CD4-positive, alpha-beta memory T cell (primary cell): ENCODE measurements at regions of chr5 and their contacts with region 1.

Region 1: GRCh38 chr5:138491669-138492559 is 26.6 kb downstream of the EGR1 start:
- DNase-seq: peak; percentile 81 to 87 (median 83)
- H3K4me3 ChIP-seq: peak overlapping the region in 1 of 2 donors; percentile 60
- H3K4me3 Mint-ChIP-seq: peak overlapping the region; percentile 84 to 97 (median 92)
- H3K27ac ChIP-seq: peak overlapping the region; percentile 34
- H3K27ac Mint-ChIP-seq: peak overlapping the region in 4 of 7 donors; percentile 71 to 94 (median 79)
- H3K4me1 ChIP-seq: peaks cover 24% of the 10 kb centered on the region
- H3K4me1 Mint-ChIP-seq: peaks cover 7 to 21% (median 12%) of the 10 kb centered on the region in 4 donors
- H3K27me3 ChIP-seq: peaks cover 8% of the 10 kb centered on the region
- H3K27me3 Mint-ChIP-seq: peaks cover 4 to 16% of the 10 kb centered on the region in 2 donors

Region 2: DNA sequence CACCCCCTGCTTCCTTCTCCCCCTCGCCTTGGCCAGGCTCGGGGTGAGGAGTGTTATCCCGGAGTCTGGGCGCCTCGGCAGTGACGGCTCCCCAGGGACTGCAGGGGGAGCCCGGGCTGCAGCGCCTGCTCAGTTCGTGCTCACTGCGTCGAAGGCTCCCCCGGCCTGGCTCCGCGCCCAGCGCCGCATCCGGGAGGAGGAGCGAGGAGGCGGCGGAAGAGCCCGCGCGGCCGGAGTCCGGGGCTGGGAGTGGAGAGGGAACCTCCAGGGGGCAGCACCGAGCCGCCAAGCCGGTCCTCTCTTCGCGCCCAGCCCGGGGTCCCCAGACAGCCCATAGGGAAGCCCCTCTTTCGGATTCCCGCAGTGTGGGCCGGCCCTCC is 27.9 kb before region 1 on chr5:
- CTCF ChIA-PET with region 1: interaction called, 507 read pairs
- POLR2A ChIA-PET with region 1: interaction called, 27 read pairs
- intact Hi-C with region 1: loop called (anchors 1 kb)
- DNase-seq: peak; percentile 91 to 95 (median 94)
- H3K4me3 ChIP-seq: peak overlapping the region; percentile 79 to 85
- H3K4me3 Mint-ChIP-seq: peak overlapping the region; percentile 85 to 97 (median 90)
- H3K27ac ChIP-seq: peak overlapping the region; percentile 90
- H3K27ac Mint-ChIP-seq: peak overlapping the region; percentile 89 to 96 (median 93)
- H3K4me1 ChIP-seq: peaks cover 46% of the 10 kb centered on the region
- H3K4me1 Mint-ChIP-seq: peaks cover 27 to 65% (median 39%) of the 10 kb centered on the region in 4 donors
- H3K27me3 ChIP-seq: no peaks in the 10 kb centered on the region
- H3K27me3 Mint-ChIP-seq: no peaks in the 10 kb centered on the region

Region 3: GRCh38 chr5:138514021-138514420 is 22.1 kb after region 1 on chr5:
- CTCF ChIA-PET with region 1: no interaction called
- POLR2A ChIA-PET with region 1: no interaction called
- intact Hi-C with region 1: no loop called
- DNase-seq: no peak
- H3K4me3 ChIP-seq: no peak overlapping the region
- H3K4me3 Mint-ChIP-seq: no peak overlapping the region
- H3K27ac ChIP-seq: no peak overlapping the region
- H3K27ac Mint-ChIP-seq: peak overlapping the region in 3 of 7 donors; percentile 5 to 66 (median 17)
- H3K4me1 ChIP-seq: no peaks in the 10 kb centered on the region
- H3K4me1 Mint-ChIP-seq: peaks cover 4 to 8% (median 5%) of the 10 kb centered on the region in 4 donors
- H3K27me3 ChIP-seq: no peaks in the 10 kb centered on the region
- H3K27me3 Mint-ChIP-seq: no peaks in the 10 kb centered on the region